ENCODE measurements at regions of chrX and their contacts with region 1.

Region 1: GRCh38 chrX:20412871-20413486 is 146.3 kb upstream of the RPS6KA3 start:
- DNase-seq: peak; percentile 20 to 80 (median 66)
- ATAC-seq: peak; percentile 93
- H3K4me3 ChIP-seq: peak overlapping the region; percentile 22
- H3K4me3 Mint-ChIP-seq: peak overlapping the region; percentile 55 to 88 (median 72)
- H3K27ac ChIP-seq: peak overlapping the region; percentile 66
- H3K27ac Mint-ChIP-seq: peak overlapping the region; percentile 86 to 98 (median 93)
- H3K4me1 ChIP-seq: peaks cover 22 to 40% of the 10 kb centered on the region in 2 donors
- H3K4me1 Mint-ChIP-seq: peaks cover 13 to 55% (median 46%) of the 10 kb centered on the region in 7 donors
- H3K27me3 ChIP-seq: no peaks in the 10 kb centered on the region
- H3K27me3 Mint-ChIP-seq: peaks cover 0 to 2% (median 0%) of the 10 kb centered on the region in 5 donors

Region 2: DNA sequence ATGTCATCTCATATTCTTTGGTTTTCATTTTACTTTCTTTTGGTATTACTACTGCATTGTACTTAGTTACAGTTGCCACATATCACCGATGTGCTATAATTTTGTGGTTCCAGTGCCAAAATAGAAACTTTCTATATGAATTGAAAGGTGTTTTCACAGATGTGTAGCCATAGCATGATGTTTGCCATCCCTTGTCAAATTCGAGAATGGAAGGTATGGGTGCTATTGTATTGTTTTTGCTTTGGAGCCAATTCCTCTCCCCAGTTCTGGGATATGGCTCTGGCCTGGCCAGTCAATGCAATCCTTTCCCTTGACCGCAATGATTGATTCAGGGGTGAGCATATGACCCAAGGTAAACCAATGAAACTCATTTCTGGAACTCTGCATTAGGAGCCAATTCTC is 60.0 kb before region 1 on chrX:
- CTCF ChIA-PET with region 1: no interaction called
- POLR2A ChIA-PET with region 1: no interaction called
- intact Hi-C with region 1: loop called in 1 of 2 experiments (anchors 5 kb)
- DNase-seq: no peak
- ATAC-seq: no peak
- H3K4me3 ChIP-seq: no peak overlapping the region
- H3K4me3 Mint-ChIP-seq: no peak overlapping the region
- H3K27ac ChIP-seq: no peak overlapping the region
- H3K27ac Mint-ChIP-seq: no peak overlapping the region
- H3K4me1 ChIP-seq: peaks cover 0 to 7% of the 10 kb centered on the region in 2 donors
- H3K4me1 Mint-ChIP-seq: peaks cover 0 to 28% (median 20%) of the 10 kb centered on the region in 7 donors
- H3K27me3 ChIP-seq: no peaks in the 10 kb centered on the region
- H3K27me3 Mint-ChIP-seq: peaks cover 0 to 5% (median 0%) of the 10 kb centered on the region in 5 donors

Region 3: GRCh38 chrX:20382518-20383297 is 30.3 kb before region 1 on chrX:
- CTCF ChIA-PET with region 1: interaction called, 3 read pairs
- POLR2A ChIA-PET with region 1: no interaction called
- intact Hi-C with region 1: loop called in 1 of 2 experiments (anchors 5 kb)
- DNase-seq: no peak
- ATAC-seq: no peak
- H3K4me3 ChIP-seq: no peak overlapping the region
- H3K4me3 Mint-ChIP-seq: peak overlapping the region in 8 of 10 donors; percentile 19 to 74 (median 45)
- H3K27ac ChIP-seq: no peak overlapping the region
- H3K27ac Mint-ChIP-seq: peak overlapping the region in 2 of 9 donors; percentile 6 to 42
- H3K4me1 ChIP-seq: peaks cover 0 to 3% of the 10 kb centered on the region in 2 donors
- H3K4me1 Mint-ChIP-seq: peaks cover 5 to 18% (median 10%) of the 10 kb centered on the region in 7 donors
- H3K27me3 ChIP-seq: no peaks in the 10 kb centered on the region
- H3K27me3 Mint-ChIP-seq: no peaks in the 10 kb centered on the region

Region 4: GRCh38 chrX:20906571-20906970 is 493.6 kb after region 1 on chrX:
- CTCF ChIA-PET with region 1: no interaction called
- POLR2A ChIA-PET with region 1: no interaction called
- intact Hi-C with region 1: no loop called
- DNase-seq: no peak
- ATAC-seq: no peak
- H3K4me3 ChIP-seq: no peak overlapping the region
- H3K4me3 Mint-ChIP-seq: no peak overlapping the region
- H3K27ac ChIP-seq: no peak overlapping the region
- H3K27ac Mint-ChIP-seq: no peak overlapping the region
- H3K4me1 ChIP-seq: no peaks in the 10 kb centered on the region
- H3K4me1 Mint-ChIP-seq: no peaks in the 10 kb centered on the region
- H3K27me3 ChIP-seq: no peaks in the 10 kb centered on the region
- H3K27me3 Mint-ChIP-seq: peaks cover 0 to 15% (median 4%) of the 10 kb centered on the region in 5 donors

Measured in naive thymus-derived CD4-positive, alpha-beta T cell (primary cell).